Naive thymus-derived CD8-positive, alpha-beta T cell (primary cell): ENCODE measurements at regions of chr14 and their contacts with region 1.

Region 1: DNA sequence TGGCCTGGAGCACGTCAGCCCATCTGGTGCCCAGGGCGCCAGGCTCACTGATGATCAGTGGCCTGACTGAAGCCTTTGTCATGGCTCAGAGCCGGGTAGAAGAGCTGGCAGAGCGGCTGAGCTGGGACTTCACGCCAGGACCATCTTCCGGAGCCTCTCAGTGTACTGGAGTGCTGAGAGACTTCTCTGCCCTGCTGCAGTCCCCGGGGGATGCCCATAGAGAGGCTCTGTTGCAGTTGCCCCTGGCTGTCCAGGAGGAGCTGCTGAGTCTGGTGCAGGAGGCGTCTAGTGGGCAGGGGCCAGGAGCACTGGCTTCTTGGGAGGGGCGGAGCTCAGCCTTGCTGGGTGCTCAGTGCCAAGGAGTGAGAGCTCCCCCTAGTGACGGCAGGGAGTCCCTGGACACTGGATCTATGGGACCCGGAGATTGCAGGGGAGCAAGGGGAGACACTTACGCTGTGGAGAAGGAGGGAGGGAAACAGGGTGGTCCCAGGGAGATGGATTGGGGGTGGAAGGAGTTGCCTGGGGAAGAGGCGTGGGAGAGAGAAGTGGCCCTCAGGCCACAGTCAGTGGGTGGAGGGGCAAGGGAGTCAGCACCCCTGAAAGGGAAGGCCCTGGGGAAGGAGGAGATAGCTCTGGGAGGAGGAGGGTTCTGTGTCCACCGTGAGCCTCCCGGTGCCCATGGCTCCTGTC is 2.0 kb downstream of the KHNYN start:
- DNase-seq: peak; percentile 79 to 94 (median 86)
- ATAC-seq: peak; percentile 53 to 58
- H3K4me3 Mint-ChIP-seq: peak overlapping the region; percentile 85 to 94 (median 90)
- H3K27ac Mint-ChIP-seq: peak overlapping the region; percentile 88 to 98 (median 96)
- H3K4me1 Mint-ChIP-seq: peaks cover 26 to 58% (median 49%) of the 10 kb centered on the region in 4 donors
- H3K27me3 Mint-ChIP-seq: no peaks in the 10 kb centered on the region

Region 2: GRCh38 chr14:24195191-24196070 is 236.3 kb before region 1 on chr14 and contains the start of gene TM9SF1:
- POLR2A ChIA-PET with region 1: interaction called, 10 read pairs
- DNase-seq: peak; percentile 81 to 95 (median 90)
- ATAC-seq: peak; percentile 87 to 88
- H3K4me3 Mint-ChIP-seq: peak within 1 kb of the TSS; percentile 84 to 98 (median 93)
- H3K27ac Mint-ChIP-seq: peak within 1 kb of the TSS; percentile 93 to 99 (median 98)
- H3K4me1 Mint-ChIP-seq: peaks cover 24 to 64% (median 62%) of the 10 kb centered on the region in 4 donors
- H3K27me3 Mint-ChIP-seq: no peaks in the 10 kb centered on the region
- polyA plus RNA-seq, gene TM9SF1: 23.1 to 29.8 (median 29.1) TPM

Region 3: DNA sequence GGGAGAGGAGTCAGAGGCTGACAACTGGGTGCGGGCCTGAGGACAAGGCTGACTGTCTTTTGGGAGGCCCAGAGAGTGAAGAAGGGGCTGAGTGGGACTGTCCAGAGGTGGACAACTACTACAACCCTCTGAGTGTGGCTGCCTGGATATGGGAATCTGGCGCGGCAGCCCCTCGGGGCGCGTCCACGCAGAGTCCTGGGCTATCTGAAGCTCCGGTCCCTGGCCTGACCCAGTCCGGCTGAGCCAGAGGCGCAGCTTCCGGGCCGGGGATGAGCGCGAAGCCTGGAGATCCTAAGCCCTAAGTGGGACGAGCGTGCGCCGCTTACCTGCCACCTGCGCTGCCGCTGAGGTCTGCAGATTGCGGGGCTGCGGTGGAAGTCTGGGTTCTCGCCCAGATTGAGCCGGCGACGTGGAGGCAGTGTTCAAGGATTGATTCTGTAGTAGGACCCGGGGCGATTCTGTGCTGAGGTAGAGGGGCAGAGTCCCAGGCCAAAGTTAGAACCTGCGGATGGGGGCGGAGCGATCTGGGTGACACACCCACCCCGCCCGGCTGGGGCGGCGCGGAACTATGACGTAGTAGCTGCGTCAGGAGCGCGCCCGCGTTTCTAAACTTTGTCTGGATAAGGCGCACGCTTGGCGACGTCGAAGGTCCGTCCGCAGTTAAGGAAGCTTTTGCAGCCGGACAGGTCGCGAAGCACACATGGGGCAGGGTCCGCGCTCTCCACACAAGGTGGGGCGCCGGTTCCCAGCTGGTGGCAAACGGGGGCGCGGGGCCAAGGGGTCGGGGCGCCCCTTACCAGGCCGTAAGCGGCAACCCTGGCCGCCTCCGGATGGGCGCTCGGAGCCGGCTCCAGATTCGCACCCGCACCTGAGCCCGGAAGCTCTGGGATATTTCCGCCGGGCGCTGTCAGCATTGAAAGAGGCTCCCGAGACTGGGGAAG is 132.2 kb before region 1 on chr14 and contains the starts of genes DHRS1 and NOP9:
- POLR2A ChIA-PET with region 1: interaction called, 14 read pairs
- DNase-seq: peak; percentile 85 to 96 (median 92)
- ATAC-seq: peak; percentile 79 to 89
- H3K4me3 Mint-ChIP-seq: peak within 1 kb of the TSS; percentile 90 to 99 (median 94)
- H3K27ac Mint-ChIP-seq: peak within 1 kb of the TSS; percentile 94 to 98 (median 97)
- H3K4me1 Mint-ChIP-seq: peaks cover 29 to 55% (median 51%) of the 10 kb centered on the region in 4 donors
- H3K27me3 Mint-ChIP-seq: no peaks in the 10 kb centered on the region
- polyA plus RNA-seq, gene DHRS1: 19.6 to 22.4 (median 20.8) TPM
- polyA plus RNA-seq, gene NOP9: 1.3 to 2.2 (median 1.6) TPM

Region 4: DNA sequence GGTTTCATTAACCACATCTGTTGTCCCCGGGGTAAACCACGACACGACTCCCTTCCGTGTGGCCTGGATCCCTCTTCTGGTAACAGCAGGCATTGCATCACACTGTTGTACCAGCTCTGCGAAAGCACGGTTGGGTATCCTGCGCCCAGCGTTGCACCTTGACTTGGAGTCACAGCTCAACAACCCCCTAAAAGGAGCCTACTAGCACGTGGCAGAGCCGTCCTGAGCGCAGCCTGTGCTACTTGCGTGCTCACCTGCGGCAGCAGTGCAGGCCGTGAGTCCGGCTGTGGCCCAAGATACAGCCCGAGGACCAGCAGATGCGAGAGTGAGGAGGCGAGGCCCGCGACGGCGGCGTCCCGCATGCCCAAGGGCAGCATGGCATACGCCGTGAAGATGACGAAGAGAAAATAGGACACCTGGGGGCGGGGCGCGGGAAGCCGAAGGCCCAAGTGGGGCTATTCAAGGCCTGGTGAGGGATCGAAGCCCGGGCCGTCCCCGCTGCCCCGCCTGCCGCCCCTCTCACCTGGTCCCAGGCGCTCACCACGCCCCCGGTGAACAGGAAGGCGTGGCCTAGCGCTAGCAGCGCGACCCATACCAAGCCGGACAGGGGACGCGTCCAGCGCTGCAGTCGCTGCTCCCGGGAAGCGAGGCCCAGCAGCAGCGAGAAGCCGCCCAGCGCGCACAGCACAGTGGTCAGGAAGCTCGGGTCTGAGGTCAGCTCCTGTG is 99.3 kb before region 1 on chr14:
- POLR2A ChIA-PET with region 1: interaction called, 99 read pairs
- DNase-seq: peak; percentile 57 to 93 (median 88)
- ATAC-seq: peak; percentile 86 to 92
- H3K4me3 Mint-ChIP-seq: peak overlapping the region; percentile 72 to 93 (median 84)
- H3K27ac Mint-ChIP-seq: peak overlapping the region; percentile 4 to 94 (median 67)
- H3K4me1 Mint-ChIP-seq: peaks cover 19 to 75% (median 55%) of the 10 kb centered on the region in 4 donors
- H3K27me3 Mint-ChIP-seq: peaks cover 15 to 59% (median 22%) of the 10 kb centered on the region in 5 donors

Region 5: DNA sequence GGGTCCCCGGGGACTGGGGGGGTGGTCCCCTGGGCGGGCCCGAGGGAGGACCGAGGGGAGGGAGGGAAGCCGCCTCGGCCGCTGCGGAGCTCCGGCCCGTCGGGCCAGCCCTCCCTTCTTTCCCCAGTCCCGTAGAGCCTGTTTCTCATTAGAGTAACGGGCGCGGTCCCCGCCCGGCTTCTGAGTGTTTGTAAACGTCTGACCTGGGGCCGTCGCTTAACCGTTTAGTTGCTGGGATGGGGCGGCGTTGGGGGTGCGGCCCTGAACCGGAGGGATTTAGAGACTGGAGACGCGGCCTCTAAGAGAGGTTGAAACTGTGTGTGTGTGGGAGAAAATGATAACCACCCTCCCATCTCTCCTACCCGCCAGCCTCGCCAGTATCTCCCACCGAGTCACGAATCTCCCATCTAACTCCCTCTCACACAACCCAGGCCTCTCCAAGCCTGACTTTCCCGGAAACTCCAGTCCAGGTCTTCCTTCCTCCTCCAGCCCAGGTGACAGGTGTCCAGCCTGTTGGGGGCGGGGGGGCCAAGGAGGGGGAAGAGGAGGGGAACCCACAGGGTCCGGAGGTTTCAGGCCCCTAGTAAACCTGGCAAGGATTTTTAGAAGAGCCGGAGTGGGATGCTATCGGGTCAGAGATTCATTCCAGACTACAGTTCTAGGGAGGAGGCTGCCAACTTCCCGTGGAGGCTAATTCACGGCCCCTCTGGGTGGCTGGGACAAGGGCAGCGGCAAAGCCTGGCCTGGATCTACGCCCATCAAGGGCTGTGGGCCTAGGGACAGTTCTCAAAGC is 64.8 kb before region 1 on chr14:
- POLR2A ChIA-PET with region 1: interaction called, 21 read pairs
- DNase-seq: peak in 4 of 10 donors; percentile 24 to 64 (median 32)
- ATAC-seq: peak in 1 of 2 donors; percentile 14
- H3K4me3 Mint-ChIP-seq: peak overlapping the region; percentile 64 to 87 (median 80)
- H3K27ac Mint-ChIP-seq: peak overlapping the region in 1 of 10 donors; percentile 62
- H3K4me1 Mint-ChIP-seq: peaks cover 14 to 43% (median 26%) of the 10 kb centered on the region in 4 donors
- H3K27me3 Mint-ChIP-seq: peaks cover 27 to 60% (median 37%) of the 10 kb centered on the region in 5 donors

Region 6: DNA sequence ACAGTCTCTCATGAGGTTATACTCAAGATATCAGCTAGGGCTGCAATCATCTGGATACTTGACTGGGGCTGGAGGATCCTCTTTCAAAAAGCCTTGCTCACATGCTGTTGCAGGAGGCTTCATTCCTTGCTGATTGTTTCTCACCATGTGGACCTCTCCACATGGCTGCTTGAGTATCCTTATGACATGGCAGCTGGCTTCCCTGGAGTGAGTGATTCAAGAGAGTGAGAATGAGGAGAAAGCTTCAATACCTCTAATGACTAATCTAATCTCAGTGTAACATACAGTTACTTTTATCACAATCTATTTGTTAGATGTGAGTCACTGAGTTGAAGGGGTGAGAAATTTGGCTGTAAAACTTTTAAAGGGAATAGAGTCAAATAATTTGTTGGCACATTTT is 25.3 kb after region 1 on chr14:
- POLR2A ChIA-PET with region 1: no interaction called
- DNase-seq: no peak
- ATAC-seq: no peak
- H3K4me3 Mint-ChIP-seq: no peak overlapping the region
- H3K27ac Mint-ChIP-seq: peak overlapping the region in 1 of 10 donors; percentile 36
- H3K4me1 Mint-ChIP-seq: peaks cover 2 to 6% (median 3%) of the 10 kb centered on the region in 4 donors
- H3K27me3 Mint-ChIP-seq: no peaks in the 10 kb centered on the region